Astrocyte of the cerebellum (primary cell): ENCODE measurements at regions of chr9 and their contacts with region 1.

Region 1: DNA sequence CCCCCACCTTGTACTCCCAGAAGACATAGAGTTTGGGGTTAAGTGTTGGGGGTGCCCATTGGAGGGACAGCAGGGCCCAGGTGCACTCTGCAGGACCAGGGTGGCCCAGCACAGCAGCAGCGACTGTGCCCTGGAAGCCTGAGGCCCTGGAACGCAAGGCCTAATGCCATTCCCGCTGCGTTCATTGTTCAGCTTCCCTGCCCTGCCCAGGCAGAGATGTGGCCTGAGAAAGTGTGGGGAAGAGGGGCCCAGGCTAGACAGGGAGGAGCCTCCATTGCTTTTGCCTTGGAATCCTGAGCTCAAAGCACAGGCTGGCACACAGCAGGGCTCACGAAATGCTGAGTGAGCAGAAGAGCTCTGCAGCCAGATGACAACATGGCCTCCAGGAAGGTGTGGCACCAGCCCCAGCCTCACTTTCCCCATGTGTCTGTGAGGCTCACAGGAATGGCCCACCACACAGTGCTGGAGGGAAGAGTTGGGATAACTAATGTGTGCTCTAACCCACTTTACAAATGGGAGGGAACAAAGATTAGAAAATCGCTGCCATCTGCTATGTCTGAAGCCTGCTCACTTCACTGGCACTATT is 19.4 kb downstream of the S1PR3 start:
- DNase-seq: no peak
- H3K4me3 ChIP-seq: no peak overlapping the region
- CTCF ChIP-seq: no peak

Region 2: GRCh38 chr9:88651682-88652633 is 358.7 kb before region 1 on chr9:
- in situ Hi-C with region 1: loop called (anchors 10 kb)
- DNase-seq: peak; percentile 94
- H3K4me3 ChIP-seq: no peak overlapping the region
- CTCF ChIP-seq: peak; percentile 56

Region 3: DNA sequence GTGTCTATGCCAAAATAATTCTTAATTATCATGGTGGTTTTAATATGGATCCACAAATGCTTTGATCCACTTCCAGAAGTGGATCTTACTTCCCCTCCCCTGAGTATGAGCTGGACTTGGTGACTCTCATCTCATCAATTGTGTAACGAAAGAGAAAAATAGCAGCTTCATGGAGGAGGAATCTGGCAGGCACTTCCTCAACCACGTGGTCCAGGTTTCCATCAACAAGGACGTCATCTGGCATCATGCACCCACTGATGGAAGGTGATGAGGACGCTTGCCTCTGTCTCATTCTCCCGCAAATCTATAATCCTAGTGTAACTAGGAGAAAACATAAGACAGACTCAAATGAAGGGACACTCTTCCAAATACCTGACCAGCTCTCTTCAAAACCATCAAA is 74.0 kb before region 1 on chr9:
- in situ Hi-C with region 1: no loop called
- DNase-seq: no peak
- H3K4me3 ChIP-seq: no peak overlapping the region
- CTCF ChIP-seq: no peak